ENCODE measurements at regions of chr10 and their contacts with region 1.

Region 1: GRCh38 chr10:124677749-124678556 is 66.2 kb downstream of the FAM53B start:
- DNase-seq: no peak
- ATAC-seq: no peak
- H3K4me3 ChIP-seq: no peak overlapping the region
- H3K4me3 Mint-ChIP-seq: no peak overlapping the region
- H3K27ac ChIP-seq: peak overlapping the region in 1 of 2 donors; percentile 57
- H3K27ac Mint-ChIP-seq: peak overlapping the region; percentile 46
- H3K4me1 ChIP-seq: peaks cover 33 to 78% of the 10 kb centered on the region in 2 donors
- H3K4me1 Mint-ChIP-seq: peaks cover 75% of the 10 kb centered on the region
- H3K27me3 ChIP-seq: no peaks in the 10 kb centered on the region
- H3K27me3 Mint-ChIP-seq: no peaks in the 10 kb centered on the region
- CTCF ChIP-seq: no peak

Region 2: DNA sequence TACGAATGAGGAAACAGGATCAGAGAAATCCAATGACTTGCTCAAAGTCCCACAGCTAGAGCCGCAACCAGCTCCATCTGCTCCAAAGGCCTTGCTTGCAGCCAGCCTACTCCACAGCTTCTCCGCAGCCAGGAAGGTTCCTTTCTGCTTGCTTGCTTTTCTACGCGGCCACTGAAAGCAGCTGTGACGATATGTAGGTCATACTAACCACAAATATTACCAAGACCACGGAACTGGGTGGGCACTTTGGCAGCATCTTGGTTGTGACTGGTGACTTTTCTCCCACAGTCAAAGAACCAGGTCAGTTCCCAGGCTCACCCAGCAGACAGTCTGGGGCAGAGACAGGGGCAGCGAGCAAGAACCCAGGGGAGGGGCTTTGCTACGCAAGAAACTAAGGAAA is 20.1 kb before region 1 on chr10:
- CTCF ChIA-PET with region 1: interaction called, 10 read pairs
- POLR2A ChIA-PET with region 1: interaction called, 3 read pairs
- intact Hi-C with region 1: no loop called
- DNase-seq: peak; percentile 55
- ATAC-seq: peak; percentile 52
- H3K4me3 ChIP-seq: no peak overlapping the region
- H3K4me3 Mint-ChIP-seq: peak overlapping the region; percentile 47
- H3K27ac ChIP-seq: peak overlapping the region; percentile 44 to 65
- H3K27ac Mint-ChIP-seq: peak overlapping the region; percentile 87
- H3K4me1 ChIP-seq: peaks cover 75 to 84% of the 10 kb centered on the region in 2 donors
- H3K4me1 Mint-ChIP-seq: peaks cover 85% of the 10 kb centered on the region
- H3K27me3 ChIP-seq: no peaks in the 10 kb centered on the region
- H3K27me3 Mint-ChIP-seq: no peaks in the 10 kb centered on the region
- CTCF ChIP-seq: no peak